ENCODE measurements at regions of chr2 and their contacts with region 1.

Region 1: DNA sequence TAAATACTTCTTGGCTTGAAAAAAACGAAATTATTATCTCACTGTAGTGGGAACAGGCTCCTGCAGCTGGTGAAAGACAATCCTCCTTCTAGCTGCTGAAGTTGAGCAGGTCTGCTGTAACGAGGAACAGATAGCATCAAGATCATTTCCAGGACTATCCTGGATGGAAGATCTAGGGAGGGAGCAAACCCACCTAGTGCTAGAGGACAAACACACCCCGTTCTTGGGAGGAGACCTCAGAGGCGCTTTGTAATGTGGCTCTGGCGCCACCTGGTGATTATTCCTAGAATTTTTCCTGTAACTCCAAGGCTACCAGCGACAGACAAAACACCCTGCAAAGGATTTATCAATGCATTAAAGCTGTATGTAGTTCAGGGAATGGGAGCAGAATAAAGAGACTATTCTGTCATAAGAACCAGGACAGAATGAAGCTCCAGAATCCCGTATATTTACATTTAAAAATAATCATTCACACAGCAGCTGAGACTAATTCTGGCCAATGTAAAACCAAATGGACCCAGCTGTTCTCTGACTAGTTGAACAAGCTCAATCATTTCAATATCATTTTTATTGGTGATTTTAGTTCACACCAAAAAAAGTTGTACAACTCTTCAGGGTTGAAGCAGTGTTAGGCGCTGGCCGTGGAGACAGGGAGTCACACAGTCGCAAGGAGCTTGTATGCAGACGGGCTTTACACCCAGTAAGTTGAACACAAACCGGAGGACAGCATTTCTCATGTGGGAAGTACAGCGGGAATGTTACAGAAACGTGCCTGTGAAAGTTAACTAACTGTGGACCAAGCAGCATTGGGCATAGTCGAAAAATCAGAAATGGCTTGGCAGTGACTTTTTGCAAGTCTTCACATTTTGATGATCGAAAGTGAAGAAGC is 290.3 kb downstream of the TRIB2 start:
- DNase-seq: no peak
- H3K4me3 ChIP-seq: peak overlapping the region in 2 of 4 donors; percentile 25 to 38
- H3K27ac ChIP-seq: no peak overlapping the region
- H3K4me1 ChIP-seq: peaks cover 6 to 23% (median 21%) of the 10 kb centered on the region in 4 donors
- H3K27me3 ChIP-seq: no peaks in the 10 kb centered on the region
- CTCF ChIP-seq: peak; percentile 81 to 94 (median 85)
- EP300 ChIP-seq: no peak
- POLR2A ChIP-seq: no peak

Region 2: GRCh38 chr2:11829947-11830707 is 1176.9 kb before region 1 on chr2:
- intact Hi-C with region 1: loop called (anchors 10 kb)
- DNase-seq: no peak
- H3K4me3 ChIP-seq: peak overlapping the region; percentile 38 to 53 (median 42)
- H3K27ac ChIP-seq: peak overlapping the region; percentile 65 to 83 (median 77)
- H3K4me1 ChIP-seq: peaks cover 21 to 28% (median 25%) of the 10 kb centered on the region in 4 donors
- H3K27me3 ChIP-seq: no peaks in the 10 kb centered on the region
- CTCF ChIP-seq: peak; percentile 25 to 41 (median 36)
- EP300 ChIP-seq: no peak
- POLR2A ChIP-seq: no peak

Region 3: DNA sequence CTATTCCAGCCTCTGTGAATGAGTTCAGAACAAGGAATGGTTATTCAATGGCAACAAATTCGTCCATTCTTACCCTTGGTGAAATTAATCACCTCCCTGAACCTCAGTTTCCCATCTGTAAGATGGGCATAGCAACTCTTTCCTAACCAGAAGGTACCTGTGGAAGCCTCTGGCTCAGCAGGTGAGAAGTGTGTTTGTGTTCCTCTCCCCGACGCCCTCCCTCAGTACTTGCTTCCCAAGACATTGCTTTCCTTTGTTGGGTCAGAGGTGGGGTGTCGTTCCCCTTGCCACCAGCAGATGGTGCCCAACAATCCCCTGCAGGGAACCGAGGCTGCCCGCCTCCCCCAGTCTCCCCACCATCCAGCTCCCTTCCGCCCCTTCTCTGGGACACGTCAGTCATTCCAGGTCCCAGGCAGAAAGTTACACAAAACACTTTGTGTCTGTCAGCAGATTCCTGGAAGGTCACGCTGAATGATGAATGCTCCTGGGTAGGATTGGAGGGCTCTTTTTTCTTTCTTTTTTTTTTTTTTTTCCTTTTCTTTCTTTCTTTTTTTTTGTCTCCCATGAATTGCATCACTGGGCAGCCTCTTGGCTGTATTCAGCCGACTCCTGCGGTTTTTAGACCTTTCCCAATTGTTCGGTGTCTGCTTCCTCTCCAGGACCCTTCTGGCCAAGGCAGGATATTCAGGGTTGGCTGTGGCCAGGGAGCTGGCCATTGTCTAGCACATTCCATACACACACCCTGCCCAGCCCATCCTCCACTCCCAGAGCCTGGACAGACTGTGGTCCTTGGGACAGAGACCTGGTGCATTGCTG is 1143.4 kb before region 1 on chr2:
- intact Hi-C with region 1: loop called (anchors 2 kb)
- DNase-seq: peak; percentile 94
- H3K4me3 ChIP-seq: peak overlapping the region in 3 of 4 donors; percentile 10 to 29 (median 21)
- H3K27ac ChIP-seq: peak overlapping the region; percentile 13 to 42 (median 34)
- H3K4me1 ChIP-seq: peaks cover 13 to 19% (median 15%) of the 10 kb centered on the region in 4 donors
- H3K27me3 ChIP-seq: no peaks in the 10 kb centered on the region
- CTCF ChIP-seq: peak in 2 of 3 experiments; percentile 92 to 97
- EP300 ChIP-seq: no peak
- POLR2A ChIP-seq: no peak